ENCODE measurements at regions of chr5 and their contacts with region 1.

Region 1: DNA sequence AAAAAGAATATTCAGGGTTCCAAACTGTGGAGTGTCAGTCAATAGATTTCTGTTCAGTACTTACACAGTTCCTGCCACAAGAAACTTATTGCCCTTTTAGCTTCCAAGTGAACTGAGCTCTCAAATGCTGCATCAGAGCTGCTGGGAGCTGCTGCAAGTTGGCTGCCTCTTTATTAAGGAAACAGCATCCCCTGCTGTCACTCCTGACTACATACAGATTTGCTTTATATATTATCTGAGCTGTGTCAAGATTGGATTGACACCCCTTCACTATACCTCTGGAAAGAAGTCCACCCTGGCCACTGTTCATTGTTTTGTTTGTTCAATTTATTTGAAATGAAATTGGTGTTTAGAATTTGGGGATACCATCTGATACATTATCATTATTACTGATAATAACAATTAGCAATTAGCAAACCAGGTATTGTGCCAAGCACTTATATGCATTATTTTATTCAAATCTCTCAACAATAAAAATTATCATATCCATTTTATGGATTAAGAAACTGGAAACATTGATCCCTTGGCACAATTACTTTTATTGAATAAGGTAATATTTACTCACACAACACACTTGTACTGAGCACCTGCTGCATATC is 16.4 kb upstream of the C5orf58 start:
- DNase-seq: peak; percentile 49 to 74
- H3K4me3 ChIP-seq: no peak overlapping the region
- H3K27ac ChIP-seq: no peak overlapping the region
- H3K4me1 ChIP-seq: peaks cover 50% of the 10 kb centered on the region
- H3K27me3 ChIP-seq: no peaks in the 10 kb centered on the region
- CTCF ChIP-seq: peak; percentile 87

Region 2: GRCh38 chr5:169583424-169584204 is 632.8 kb before region 1 on chr5 and contains the start of gene SPDL1:
- CTCF ChIA-PET with region 1: no interaction called
- POLR2A ChIA-PET with region 1: no interaction called
- intact Hi-C with region 1: loop called (anchors 5 kb)
- DNase-seq: peak; percentile 87 to 96
- H3K4me3 ChIP-seq: peak within 1 kb of the TSS; percentile 95
- H3K27ac ChIP-seq: peak within 1 kb of the TSS; percentile 60
- H3K4me1 ChIP-seq: peaks cover 14% of the 10 kb centered on the region
- H3K27me3 ChIP-seq: no peaks in the 10 kb centered on the region
- CTCF ChIP-seq: no peak
- total RNA-seq, gene SPDL1: 30.5 and 39.2 TPM in 2 replicates

Region 3: GRCh38 chr5:169763376-169764017 is 452.9 kb before region 1 on chr5:
- CTCF ChIA-PET with region 1: no interaction called
- POLR2A ChIA-PET with region 1: no interaction called
- intact Hi-C with region 1: no loop called
- DNase-seq: no peak
- H3K4me3 ChIP-seq: no peak overlapping the region
- H3K27ac ChIP-seq: no peak overlapping the region
- H3K4me1 ChIP-seq: no peaks in the 10 kb centered on the region
- H3K27me3 ChIP-seq: no peaks in the 10 kb centered on the region
- CTCF ChIP-seq: no peak

Region 4: DNA sequence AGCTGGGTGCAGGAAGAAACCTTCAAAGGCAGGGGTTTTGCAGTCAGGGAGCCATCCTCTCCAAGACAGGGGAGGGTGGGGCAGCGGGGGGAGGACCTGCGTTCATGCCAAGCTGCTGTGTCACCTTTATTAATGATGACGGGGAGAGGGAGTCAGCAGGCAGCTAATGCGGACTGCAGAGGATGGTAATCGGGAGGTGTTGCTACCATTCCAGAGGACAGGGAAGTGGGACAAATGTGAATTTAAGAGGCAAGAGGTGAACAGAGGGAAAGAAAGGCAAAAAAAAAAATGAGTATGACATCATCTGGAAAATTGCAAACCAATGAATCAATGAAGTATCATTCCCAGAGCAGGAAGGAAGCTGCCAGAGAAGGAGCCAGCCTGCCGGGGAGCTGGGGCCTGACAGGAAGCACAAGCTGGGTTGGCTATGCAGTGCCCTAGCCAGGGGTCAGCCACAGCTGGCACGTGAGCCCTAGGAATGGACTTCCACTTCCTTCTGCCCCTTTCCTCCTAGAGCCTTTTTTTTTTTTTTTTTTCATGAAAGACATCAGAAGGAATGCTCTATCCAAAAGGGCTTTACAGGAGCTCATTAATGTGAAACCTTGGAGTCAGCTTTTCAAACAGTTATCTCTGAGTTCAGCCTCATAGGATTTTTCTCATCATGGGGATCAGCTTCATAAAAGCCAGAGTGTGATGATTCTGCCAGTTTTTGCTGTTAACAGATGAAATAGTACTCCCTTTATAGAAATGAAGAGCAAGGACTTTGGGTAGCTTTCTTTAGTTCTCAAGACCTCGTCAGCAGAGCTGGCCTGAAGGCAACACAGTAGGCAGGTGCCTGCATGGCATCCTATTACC is 245.2 kb before region 1 on chr5:
- CTCF ChIA-PET with region 1: no interaction called
- POLR2A ChIA-PET with region 1: no interaction called
- intact Hi-C with region 1: loop called (anchors 5 kb)
- DNase-seq: peak; percentile 76 to 98
- H3K4me3 ChIP-seq: no peak overlapping the region
- H3K27ac ChIP-seq: peak overlapping the region; percentile 88
- H3K4me1 ChIP-seq: peaks cover 29% of the 10 kb centered on the region
- H3K27me3 ChIP-seq: no peaks in the 10 kb centered on the region
- CTCF ChIP-seq: no peak

Region 5: DNA sequence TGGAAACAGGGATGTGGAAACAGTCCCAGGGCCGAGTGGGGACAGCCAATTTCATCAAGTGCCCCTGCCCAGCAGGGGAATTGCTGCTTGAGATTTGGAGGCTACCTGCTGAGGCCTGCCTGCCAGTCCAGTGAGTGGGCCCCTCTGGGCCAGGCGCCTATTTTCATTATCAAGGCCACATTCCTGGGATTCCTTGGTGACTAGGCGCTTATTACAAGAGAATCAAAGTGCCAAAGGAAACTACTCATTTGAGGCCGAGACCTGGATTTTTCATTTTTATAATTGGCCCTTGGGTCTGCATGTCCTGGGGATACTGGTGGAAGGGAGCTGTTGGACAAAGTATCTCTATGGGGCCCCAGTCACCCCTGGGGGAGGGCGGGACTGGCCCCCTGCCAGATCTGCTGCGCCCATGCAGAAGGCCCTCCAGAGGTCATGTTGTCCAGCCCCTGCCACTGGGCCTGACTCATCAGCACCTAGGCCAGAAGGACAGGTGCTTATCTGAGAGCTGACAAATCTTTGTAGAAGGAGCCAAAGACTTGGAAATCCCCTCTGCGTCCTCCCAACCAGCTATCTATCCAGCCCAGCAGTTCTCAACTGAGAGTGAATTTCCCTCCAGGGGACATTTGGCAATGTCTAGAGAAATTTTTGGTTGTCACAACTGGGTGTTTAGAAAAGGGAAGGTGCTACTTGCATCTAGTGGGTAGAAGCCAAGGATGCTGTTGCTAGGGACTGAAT is 65.1 kb before region 1 on chr5:
- CTCF ChIA-PET with region 1: interaction called, 3 read pairs
- POLR2A ChIA-PET with region 1: no interaction called
- intact Hi-C with region 1: loop called (anchors 1 kb)
- DNase-seq: peak; percentile 100
- H3K4me3 ChIP-seq: no peak overlapping the region; the same call in 1 of the 2 replicates
- H3K27ac ChIP-seq: peak overlapping the region; percentile 91
- H3K4me1 ChIP-seq: peaks cover 55% of the 10 kb centered on the region
- H3K27me3 ChIP-seq: no peaks in the 10 kb centered on the region
- CTCF ChIP-seq: no peak

Region 6: GRCh38 chr5:170183816-170184687 is 32.3 kb before region 1 on chr5:
- CTCF ChIA-PET with region 1: interaction called, 8 read pairs
- POLR2A ChIA-PET with region 1: no interaction called
- intact Hi-C with region 1: loop called (anchors 2 kb)
- DNase-seq: peak in 1 of 2 experiments; percentile 80
- H3K4me3 ChIP-seq: no peak overlapping the region
- H3K27ac ChIP-seq: no peak overlapping the region
- H3K4me1 ChIP-seq: peaks cover 21% of the 10 kb centered on the region
- H3K27me3 ChIP-seq: no peaks in the 10 kb centered on the region
- CTCF ChIP-seq: peak; percentile 93

Measured in PC-9 (cell line).